A549 (cell line): ENCODE measurements at regions of chr16 and their contacts with region 1.

Region 1: DNA sequence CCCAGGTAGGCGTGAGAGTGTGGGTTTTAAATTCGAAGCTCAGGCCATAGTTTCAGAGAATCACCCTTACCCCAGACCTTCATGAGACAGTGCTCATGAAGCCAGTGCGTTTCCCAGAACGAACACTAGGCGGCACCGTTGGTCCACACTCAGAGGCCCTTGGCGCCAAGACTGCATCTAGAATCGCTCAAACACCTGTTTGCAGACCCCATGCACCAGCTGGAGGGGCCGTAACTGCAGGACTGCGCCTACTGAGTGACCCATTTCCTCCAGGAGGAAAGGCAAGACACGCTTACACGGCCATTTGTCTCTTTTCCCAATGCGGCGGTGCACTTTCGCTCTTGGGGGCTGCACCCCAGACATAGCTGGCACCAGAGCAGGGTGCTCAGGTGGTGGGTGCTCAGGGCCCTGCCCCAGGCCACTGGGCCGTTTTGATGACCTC is 34.0 kb downstream of the ADGRG5 start:
- DNase-seq: peak; percentile 73 to 78
- ATAC-seq: peak; percentile 89 to 95
- H3K4me3 ChIP-seq: no peak overlapping the region
- H3K27ac ChIP-seq: peak overlapping the region in 1 of 2 experiments; percentile 34; a peak in 1 of 6 replicates
- H3K4me1 ChIP-seq: peaks cover 6% of the 10 kb centered on the region; the same call in 2 of the 3 replicates
- CTCF ChIP-seq: peak; percentile 97
- EP300 ChIP-seq: no peak
- POLR2A ChIP-seq: no peak
- RAD21 ChIP-seq: peak; percentile 95 to 99

Region 2: DNA sequence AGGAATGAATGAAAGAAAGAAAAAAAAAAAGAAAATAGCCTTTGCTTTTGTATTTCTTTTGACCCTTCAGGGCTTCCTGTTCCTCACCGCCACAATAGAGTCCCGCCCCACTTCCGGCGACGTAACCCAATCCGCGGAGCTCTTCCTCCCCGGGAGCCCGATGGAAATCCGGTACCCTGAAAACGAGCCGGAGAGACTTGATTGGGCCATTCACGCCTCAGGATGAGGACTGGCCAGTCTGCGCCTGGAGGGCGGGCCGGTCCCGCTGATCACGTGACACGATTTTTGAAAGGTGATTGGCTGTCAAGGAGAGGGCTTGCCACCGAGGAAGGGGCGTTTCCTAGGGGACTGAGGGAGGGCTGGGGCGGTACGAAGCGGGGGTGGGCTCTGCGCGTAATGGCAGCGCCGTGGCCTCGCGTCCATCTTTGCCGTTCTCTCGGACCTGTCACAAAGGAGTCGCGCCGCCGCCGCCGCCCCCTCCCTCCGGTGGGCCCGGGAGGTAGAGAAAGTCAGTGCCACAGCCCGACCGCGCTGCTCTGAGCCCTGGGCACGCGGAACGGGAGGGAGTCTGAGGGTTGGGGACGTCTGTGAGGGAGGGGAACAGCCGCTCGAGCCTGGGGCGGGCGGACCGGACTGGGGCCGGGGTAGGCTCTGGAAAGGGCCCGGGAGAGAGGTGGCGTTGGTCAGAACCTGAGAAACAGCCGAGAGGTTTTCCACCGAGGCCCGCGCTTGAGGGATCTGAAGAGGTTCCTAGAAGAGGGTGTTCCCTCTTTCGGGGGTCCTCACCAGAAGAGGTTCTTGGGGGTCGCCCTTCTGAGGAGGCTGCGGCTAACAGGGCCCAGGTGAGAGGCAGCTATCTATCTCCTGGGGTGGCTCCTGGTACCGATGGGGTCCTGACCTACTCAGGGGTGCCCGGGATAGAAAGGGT is 390.2 kb before region 1 on chr16 and contains the starts of genes PSME3IP1 and RSPRY1:
- CTCF ChIA-PET with region 1: no interaction called
- POLR2A ChIA-PET with region 1: no interaction called
- DNase-seq: peak; percentile 100
- ATAC-seq: peak; percentile 92 to 97
- H3K4me3 ChIP-seq: peak within 1 kb of the TSS; percentile 88
- H3K27ac ChIP-seq: peak within 1 kb of the TSS; percentile 88 to 99
- H3K4me1 ChIP-seq: peaks cover 24% of the 10 kb centered on the region
- CTCF ChIP-seq: no peak
- EP300 ChIP-seq: no peak
- POLR2A ChIP-seq: peak; percentile 88
- RAD21 ChIP-seq: no peak
- polyA plus RNA-seq, gene PSME3IP1: 128 and 155 TPM in 2 replicates
- polyA plus RNA-seq, gene RSPRY1: 50.0 and 58.5 TPM in 2 replicates

Region 3: GRCh38 chr16:57470683-57471082 is 105.8 kb before region 1 on chr16:
- CTCF ChIA-PET with region 1: no interaction called
- POLR2A ChIA-PET with region 1: no interaction called
- DNase-seq: peak in 1 of 2 experiments; percentile 66
- ATAC-seq: peak in 1 of 2 experiments; percentile 3; a peak in 2 of 6 replicates
- H3K4me3 ChIP-seq: peak overlapping the region; percentile 26; the same call in 2 of the 3 replicates
- H3K27ac ChIP-seq: peak overlapping the region; percentile 96 to 98
- H3K4me1 ChIP-seq: peaks cover 93% of the 10 kb centered on the region
- CTCF ChIP-seq: 0 out of 3 replicates have a peak, but pooled peaks have one; percentile 6
- EP300 ChIP-seq: peak; percentile 34; a peak in 1 of 5 replicates
- POLR2A ChIP-seq: no peak
- RAD21 ChIP-seq: no peak

Region 4: DNA sequence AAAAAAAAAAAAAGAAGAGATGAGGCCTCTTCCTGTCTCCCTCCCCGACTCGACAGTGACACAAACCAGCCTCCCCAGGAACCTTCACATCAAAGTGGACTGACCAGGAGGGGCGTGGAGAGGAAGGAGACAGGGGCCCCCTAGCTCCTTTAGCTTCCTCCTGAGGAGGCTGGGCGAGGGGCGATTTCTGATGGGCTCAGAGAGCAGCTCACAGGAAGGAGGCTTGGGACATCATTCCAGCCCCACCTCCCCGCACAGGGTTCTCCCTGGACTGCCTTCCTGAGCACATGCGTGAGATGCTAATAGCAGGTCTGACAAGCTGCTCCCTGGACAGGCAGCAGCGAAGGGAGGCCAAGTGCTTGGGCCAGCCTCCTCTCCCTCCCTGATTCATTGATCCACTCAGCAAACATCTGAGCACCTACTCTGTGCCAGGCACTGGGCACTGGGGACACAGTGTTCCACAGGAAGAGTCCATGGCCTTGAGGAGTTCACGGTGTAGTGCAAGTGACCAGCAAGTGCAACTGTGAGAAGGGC is 75.8 kb before region 1 on chr16:
- CTCF ChIA-PET with region 1: no interaction called
- POLR2A ChIA-PET with region 1: no interaction called
- DNase-seq: no peak
- ATAC-seq: no peak
- H3K4me3 ChIP-seq: no peak overlapping the region
- H3K27ac ChIP-seq: peak overlapping the region in 1 of 2 experiments; percentile 39; a peak in 3 of 6 replicates
- H3K4me1 ChIP-seq: peaks cover 5% of the 10 kb centered on the region; the same call in 1 of the 3 replicates
- CTCF ChIP-seq: no peak
- EP300 ChIP-seq: no peak
- POLR2A ChIP-seq: no peak
- RAD21 ChIP-seq: no peak

Region 5: GRCh38 chr16:57535680-57536305 is 40.7 kb before region 1 on chr16:
- CTCF ChIA-PET with region 1: interaction called, 10 read pairs
- POLR2A ChIA-PET with region 1: no interaction called
- DNase-seq: peak; percentile 92 to 98
- ATAC-seq: peak; percentile 94 to 98
- H3K4me3 ChIP-seq: peak overlapping the region; percentile 67
- H3K27ac ChIP-seq: peak overlapping the region; percentile 95 to 96
- H3K4me1 ChIP-seq: peaks cover 51% of the 10 kb centered on the region
- CTCF ChIP-seq: no peak
- EP300 ChIP-seq: no peak
- POLR2A ChIP-seq: peak; percentile 32
- RAD21 ChIP-seq: no peak

Region 6: DNA sequence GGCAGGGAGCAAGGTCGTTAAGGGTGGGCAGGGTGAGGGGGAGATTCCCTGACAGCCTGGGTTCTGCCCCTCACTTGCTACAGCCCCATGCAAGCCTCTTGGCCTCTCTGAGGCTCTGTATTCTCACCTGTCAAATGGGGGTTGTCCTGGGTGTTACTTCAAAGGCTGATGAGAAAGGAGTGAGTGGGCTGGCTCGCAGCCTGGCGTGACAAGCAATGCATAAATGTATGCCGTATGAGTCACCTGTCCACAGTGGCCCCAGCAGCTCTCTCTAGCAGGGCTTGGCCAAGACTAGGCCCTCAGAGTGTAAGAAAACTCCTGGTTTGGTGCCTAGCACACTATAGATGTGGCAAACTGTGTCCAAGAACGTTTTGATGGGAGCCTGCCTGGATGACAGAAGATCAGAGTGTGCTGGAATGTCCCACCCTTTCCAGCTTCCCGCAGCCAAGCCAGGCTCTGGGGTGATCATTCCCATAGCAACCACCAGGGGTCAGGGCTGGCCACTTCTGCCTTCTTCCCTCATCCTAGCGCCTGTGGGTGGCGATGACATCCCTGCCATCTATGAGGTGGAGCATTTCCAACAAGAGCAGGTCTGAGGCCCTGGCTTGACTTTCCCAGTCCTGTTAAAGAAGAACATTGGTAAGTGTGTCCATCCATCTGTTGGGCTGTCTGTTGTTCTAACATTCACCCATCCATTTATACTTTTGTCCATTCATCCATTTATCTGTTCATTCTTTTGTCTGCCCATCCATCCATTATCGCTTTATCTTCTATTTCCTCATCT is 14.8 kb after region 1 on chr16:
- CTCF ChIA-PET with region 1: interaction called, 127 read pairs
- POLR2A ChIA-PET with region 1: no interaction called
- DNase-seq: peak; percentile 82 to 90
- ATAC-seq: peak; percentile 94 to 97
- H3K4me3 ChIP-seq: no peak overlapping the region
- H3K27ac ChIP-seq: peak overlapping the region; percentile 55 to 78
- H3K4me1 ChIP-seq: peaks cover 18% of the 10 kb centered on the region
- CTCF ChIP-seq: peak; percentile 95
- EP300 ChIP-seq: no peak
- POLR2A ChIP-seq: no peak
- RAD21 ChIP-seq: peak; percentile 95 to 96

Region 7: DNA sequence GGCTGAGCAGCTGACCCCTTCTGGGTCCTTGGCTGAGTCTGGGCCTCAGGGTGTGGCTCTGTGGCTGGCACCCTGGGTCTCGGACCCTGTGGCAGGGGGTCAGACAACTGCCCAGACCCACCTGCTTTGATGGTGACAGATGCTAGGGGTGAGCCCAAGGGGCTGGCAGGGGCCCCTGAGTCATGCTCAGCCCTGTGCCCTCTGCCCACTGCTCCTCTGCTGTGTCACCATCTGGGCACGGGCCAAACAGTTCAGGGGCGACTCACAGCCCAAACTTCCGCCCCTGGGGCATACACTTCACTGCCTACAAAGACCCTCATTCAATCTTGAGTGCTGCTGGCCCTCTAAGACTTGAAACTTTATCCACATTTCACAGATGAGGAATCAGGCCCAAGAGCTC is 57.7 kb after region 1 on chr16:
- CTCF ChIA-PET with region 1: interaction called, 37 read pairs
- POLR2A ChIA-PET with region 1: no interaction called
- DNase-seq: no peak
- ATAC-seq: peak in 1 of 2 experiments; percentile 20; a peak in 2 of 6 replicates
- H3K4me3 ChIP-seq: no peak overlapping the region
- H3K27ac ChIP-seq: peak overlapping the region; percentile 19 to 98
- H3K4me1 ChIP-seq: peaks cover 82% of the 10 kb centered on the region
- CTCF ChIP-seq: no peak
- EP300 ChIP-seq: no peak
- POLR2A ChIP-seq: no peak
- RAD21 ChIP-seq: no peak

Region 8: GRCh38 chr16:57675741-57676584 is 99.5 kb after region 1 on chr16:
- CTCF ChIA-PET with region 1: interaction called, 14 read pairs
- POLR2A ChIA-PET with region 1: no interaction called
- DNase-seq: peak in 1 of 2 experiments; percentile 66
- ATAC-seq: peak; percentile 51 to 66; a peak in 5 of 6 replicates
- H3K4me3 ChIP-seq: no peak overlapping the region
- H3K27ac ChIP-seq: peak overlapping the region; percentile 55 to 76
- H3K4me1 ChIP-seq: peaks cover 35% of the 10 kb centered on the region
- CTCF ChIP-seq: no peak
- EP300 ChIP-seq: no peak; a peak in 1 of 5 replicates
- POLR2A ChIP-seq: no peak
- RAD21 ChIP-seq: no peak

Region 9: DNA sequence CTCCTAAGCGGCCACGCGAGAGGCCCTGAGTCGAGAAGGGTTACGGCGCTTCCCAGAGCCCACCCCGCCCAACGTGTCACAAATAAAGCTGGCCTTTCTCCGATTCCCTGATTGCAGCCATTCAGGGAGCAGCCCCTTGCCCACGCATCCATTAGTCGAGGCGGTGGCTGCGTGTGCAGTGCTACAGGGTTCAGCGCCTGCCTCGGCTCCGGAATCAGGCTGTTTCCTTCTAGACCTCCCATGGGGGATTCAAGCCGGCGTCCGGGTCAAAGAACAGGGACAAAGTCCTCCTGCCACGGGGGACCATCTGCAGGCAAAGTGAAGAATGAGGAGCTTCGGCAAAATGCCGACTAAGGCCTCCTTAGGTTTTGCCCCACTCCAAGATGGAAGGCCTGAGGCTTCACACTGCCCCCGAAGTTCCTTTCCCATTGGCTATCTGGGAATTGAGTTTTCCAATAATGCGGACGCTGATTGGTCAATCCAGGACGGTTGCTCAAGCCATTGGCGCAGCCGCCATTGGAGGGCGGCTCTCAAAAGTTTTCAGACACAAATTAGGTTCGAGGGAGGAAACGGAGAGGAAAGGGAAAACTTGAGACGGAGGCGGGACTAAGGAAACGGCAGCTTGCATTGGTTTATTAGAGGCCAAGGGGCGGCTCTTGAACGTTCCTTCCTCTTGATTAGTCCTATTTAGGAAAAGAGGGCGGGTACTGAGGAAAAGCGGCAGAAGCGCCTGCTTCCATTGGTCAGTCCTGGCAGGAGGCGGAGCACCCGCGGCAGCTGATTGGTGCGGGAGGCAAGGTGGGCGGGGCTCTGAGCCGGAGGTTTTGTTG is 158.7 kb after region 1 on chr16:
- CTCF ChIA-PET with region 1: interaction called, 31 read pairs
- POLR2A ChIA-PET with region 1: interaction called, 4 read pairs
- DNase-seq: peak; percentile 99 to 100
- ATAC-seq: peak; percentile 88 to 95
- H3K4me3 ChIP-seq: peak overlapping the region; percentile 72
- H3K27ac ChIP-seq: peak overlapping the region; percentile 92 to 93
- H3K4me1 ChIP-seq: peaks cover 12% of the 10 kb centered on the region
- CTCF ChIP-seq: no peak
- EP300 ChIP-seq: no peak
- POLR2A ChIP-seq: 0 out of 2 replicates have a peak, but pooled peaks have one; percentile 8
- RAD21 ChIP-seq: no peak

Region 10: GRCh38 chr16:57795431-57795878 is 219.0 kb after region 1 on chr16:
- CTCF ChIA-PET with region 1: interaction called, 11 read pairs
- POLR2A ChIA-PET with region 1: no interaction called
- DNase-seq: peak; percentile 79 to 89
- ATAC-seq: peak; percentile 33 to 51; a peak in 5 of 6 replicates
- H3K4me3 ChIP-seq: peak overlapping the region; percentile 53
- H3K27ac ChIP-seq: peak overlapping the region; percentile 91 to 100
- H3K4me1 ChIP-seq: peaks cover 55% of the 10 kb centered on the region
- CTCF ChIP-seq: peak; percentile 51
- EP300 ChIP-seq: no peak
- POLR2A ChIP-seq: no peak
- RAD21 ChIP-seq: peak; percentile 57 to 62